ENCODE measurements at regions of chr4 and their contacts with region 1.

Region 1: GRCh38 chr4:56240554-56241174 is 146.6 kb downstream of the AASDH start:
- DNase-seq: no peak
- H3K4me3 ChIP-seq: no peak overlapping the region
- H3K27ac ChIP-seq: no peak overlapping the region
- H3K4me1 ChIP-seq: no peaks in the 10 kb centered on the region
- H3K27me3 ChIP-seq: no peaks in the 10 kb centered on the region
- CTCF ChIP-seq: no peak
- POLR2A ChIP-seq: no peak

Region 2: GRCh38 chr4:56055027-56055977 is 185.4 kb before region 1 on chr4:
- CTCF ChIA-PET with region 1: no interaction called
- POLR2A ChIA-PET with region 1: interaction called, 12 read pairs
- dilution Hi-C with region 1: no loop called
- intact Hi-C with region 1: no loop called
- DNase-seq: no peak
- H3K4me3 ChIP-seq: no peak overlapping the region
- H3K27ac ChIP-seq: no peak overlapping the region
- H3K4me1 ChIP-seq: no peaks in the 10 kb centered on the region
- H3K27me3 ChIP-seq: no peaks in the 10 kb centered on the region
- CTCF ChIP-seq: no peak
- POLR2A ChIP-seq: no peak

Region 3: GRCh38 chr4:56186808-56187523 is 53.7 kb before region 1 on chr4:
- CTCF ChIA-PET with region 1: no interaction called
- POLR2A ChIA-PET with region 1: no interaction called
- dilution Hi-C with region 1: no loop called
- intact Hi-C with region 1: no loop called
- DNase-seq: no peak
- H3K4me3 ChIP-seq: no peak overlapping the region
- H3K27ac ChIP-seq: no peak overlapping the region
- H3K4me1 ChIP-seq: no peaks in the 10 kb centered on the region
- H3K27me3 ChIP-seq: no peaks in the 10 kb centered on the region
- CTCF ChIP-seq: no peak
- POLR2A ChIP-seq: no peak

Region 4: GRCh38 chr4:56289934-56290333 is 49.3 kb after region 1 on chr4:
- CTCF ChIA-PET with region 1: no interaction called
- POLR2A ChIA-PET with region 1: no interaction called
- dilution Hi-C with region 1: no loop called
- intact Hi-C with region 1: no loop called
- DNase-seq: no peak
- H3K4me3 ChIP-seq: no peak overlapping the region
- H3K27ac ChIP-seq: no peak overlapping the region
- H3K4me1 ChIP-seq: peaks cover 12% of the 10 kb centered on the region
- H3K27me3 ChIP-seq: no peaks in the 10 kb centered on the region
- CTCF ChIP-seq: no peak
- POLR2A ChIP-seq: no peak